Activated naive CD8-positive, alpha-beta T cell treated with anti-CD3 and anti-CD28 coated beads, Interleukin-2, amount 10 ng/mL, durations not matched to agents 7 days and 5 days (primary cell): ENCODE measurements at regions of chr17 and their contacts with region 1.

Region 1: DNA sequence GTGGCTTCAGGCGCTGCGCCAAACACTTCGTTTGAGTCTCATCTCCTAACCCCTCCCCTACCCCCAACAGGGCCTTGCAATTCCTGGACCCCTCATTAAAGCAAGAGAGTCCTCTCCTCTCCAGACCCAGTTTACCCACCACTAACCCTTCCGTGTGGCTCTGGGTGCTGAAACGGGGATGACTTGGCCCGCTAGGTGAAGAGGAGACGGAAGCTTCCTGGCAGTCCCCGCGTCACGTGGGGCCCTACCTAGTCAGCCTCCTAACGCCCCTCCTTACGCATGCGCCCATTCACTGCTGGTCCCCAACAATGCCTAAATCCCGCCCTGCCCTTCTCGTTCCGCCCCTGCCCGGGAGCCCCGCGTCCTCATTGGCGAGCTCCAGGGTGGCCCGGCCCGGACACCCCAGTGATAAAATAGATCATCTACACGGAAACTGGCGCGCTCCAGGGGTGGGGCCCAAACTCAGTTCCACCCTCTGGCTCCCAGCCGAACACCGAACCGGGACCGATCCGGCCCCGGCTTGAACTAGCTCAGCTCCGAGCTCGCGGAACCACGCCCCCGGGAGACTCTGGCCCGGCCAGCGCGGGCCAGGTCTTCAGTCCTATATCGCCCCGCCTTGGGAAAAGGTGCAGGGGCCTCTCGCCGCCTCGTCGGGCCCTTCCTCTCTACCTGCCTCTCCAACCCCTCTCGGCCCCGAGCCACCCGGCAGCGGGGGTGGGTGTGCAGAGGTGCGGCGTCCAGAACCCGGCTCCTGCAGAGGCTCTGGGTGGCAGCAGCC is at the start of gene SLC16A13:
- DNase-seq: peak; percentile 94
- ATAC-seq: peak; percentile 93
- H3K4me3 Mint-ChIP-seq: peak within 1 kb of the TSS; percentile 95
- H3K27ac Mint-ChIP-seq: peak within 1 kb of the TSS; percentile 89
- H3K4me1 Mint-ChIP-seq: peaks cover 40% of the 10 kb centered on the region
- H3K27me3 Mint-ChIP-seq: no peaks in the 10 kb centered on the region
- total RNA-seq, gene SLC16A13: 15.8 to 16.0 TPM

Region 2: DNA sequence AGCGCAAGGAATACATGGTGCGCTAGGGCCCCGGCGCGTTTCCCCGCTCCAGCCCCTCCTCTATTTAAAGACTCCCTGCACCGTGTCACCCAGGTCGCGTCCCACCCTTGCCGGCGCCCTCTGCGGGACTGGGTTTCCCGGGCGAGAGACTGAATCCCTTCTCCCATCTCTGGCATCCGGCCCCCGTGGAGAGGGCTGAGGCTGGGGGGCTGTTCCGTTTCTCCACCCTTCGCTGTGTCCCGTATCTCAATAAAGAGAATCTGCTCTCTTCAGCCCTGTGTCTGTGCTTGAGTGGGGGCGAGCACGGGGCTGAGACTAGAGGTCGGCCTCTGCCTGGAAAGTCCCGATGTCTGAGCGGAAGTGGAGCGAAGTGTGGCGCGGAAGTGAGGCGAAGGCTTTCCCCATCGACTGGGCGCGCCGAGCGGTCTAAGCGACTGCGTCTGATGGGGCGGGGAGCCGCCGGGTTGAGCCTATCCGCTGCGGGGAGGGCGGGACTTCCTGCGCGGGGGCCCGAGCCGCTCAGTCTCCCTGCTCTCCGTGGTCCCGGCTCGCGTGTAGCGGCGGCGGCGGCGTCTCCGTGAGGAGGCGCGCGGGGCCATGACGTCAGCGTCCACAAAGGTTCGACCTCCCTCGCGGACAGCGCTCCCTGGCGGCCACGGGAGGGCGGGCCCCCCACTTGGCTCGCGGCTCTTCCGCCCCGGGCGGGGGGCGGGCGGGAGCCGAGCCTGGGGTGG is 21.4 kb before region 1 on chr17:
- POLR2A ChIA-PET with region 1: interaction called, 41 read pairs
- DNase-seq: peak; percentile 98
- ATAC-seq: peak; percentile 87
- H3K4me3 Mint-ChIP-seq: peak overlapping the region; percentile 96
- H3K27ac Mint-ChIP-seq: peak overlapping the region; percentile 99
- H3K4me1 Mint-ChIP-seq: peaks cover 60% of the 10 kb centered on the region
- H3K27me3 Mint-ChIP-seq: no peaks in the 10 kb centered on the region

Region 3: GRCh38 chr17:7021993-7022778 is 13.6 kb before region 1 on chr17:
- POLR2A ChIA-PET with region 1: interaction called, 57 read pairs
- DNase-seq: peak; percentile 92
- ATAC-seq: peak; percentile 73
- H3K4me3 Mint-ChIP-seq: peak overlapping the region; percentile 61
- H3K27ac Mint-ChIP-seq: peak overlapping the region; percentile 70
- H3K4me1 Mint-ChIP-seq: peaks cover 42% of the 10 kb centered on the region
- H3K27me3 Mint-ChIP-seq: no peaks in the 10 kb centered on the region